ENCODE measurements at regions of chr2 and their contacts with region 1.

Region 1: DNA sequence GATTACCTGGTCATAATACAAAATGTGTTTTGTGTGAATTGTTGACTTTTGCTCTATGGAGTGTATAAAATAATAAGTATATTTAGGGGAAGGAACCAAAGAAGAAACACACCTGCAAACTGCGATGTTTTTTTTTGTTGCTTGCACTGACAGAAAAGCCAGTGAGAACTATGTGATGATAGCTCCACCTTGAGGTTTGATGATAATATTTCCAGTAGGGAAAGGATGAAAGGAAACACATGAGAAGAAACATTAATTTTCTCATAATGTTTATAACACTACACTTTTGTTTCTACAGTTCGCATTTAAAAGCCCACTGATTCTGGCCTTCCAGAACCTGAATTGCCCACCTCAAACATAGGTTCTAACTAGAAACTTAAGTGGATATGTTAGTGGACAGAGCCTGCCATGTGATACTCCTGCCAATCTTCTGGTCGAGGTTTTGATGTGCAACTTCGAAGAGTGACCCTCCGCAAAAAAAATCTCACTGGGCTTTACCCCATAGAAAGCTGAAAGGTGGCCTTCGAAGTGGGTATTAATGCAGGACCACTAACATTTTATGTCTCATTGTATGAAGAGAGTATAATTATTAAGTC is 476.4 kb upstream of the SPHKAP start:
- DNase-seq: no peak
- ATAC-seq: peak; percentile 69

Region 2: DNA sequence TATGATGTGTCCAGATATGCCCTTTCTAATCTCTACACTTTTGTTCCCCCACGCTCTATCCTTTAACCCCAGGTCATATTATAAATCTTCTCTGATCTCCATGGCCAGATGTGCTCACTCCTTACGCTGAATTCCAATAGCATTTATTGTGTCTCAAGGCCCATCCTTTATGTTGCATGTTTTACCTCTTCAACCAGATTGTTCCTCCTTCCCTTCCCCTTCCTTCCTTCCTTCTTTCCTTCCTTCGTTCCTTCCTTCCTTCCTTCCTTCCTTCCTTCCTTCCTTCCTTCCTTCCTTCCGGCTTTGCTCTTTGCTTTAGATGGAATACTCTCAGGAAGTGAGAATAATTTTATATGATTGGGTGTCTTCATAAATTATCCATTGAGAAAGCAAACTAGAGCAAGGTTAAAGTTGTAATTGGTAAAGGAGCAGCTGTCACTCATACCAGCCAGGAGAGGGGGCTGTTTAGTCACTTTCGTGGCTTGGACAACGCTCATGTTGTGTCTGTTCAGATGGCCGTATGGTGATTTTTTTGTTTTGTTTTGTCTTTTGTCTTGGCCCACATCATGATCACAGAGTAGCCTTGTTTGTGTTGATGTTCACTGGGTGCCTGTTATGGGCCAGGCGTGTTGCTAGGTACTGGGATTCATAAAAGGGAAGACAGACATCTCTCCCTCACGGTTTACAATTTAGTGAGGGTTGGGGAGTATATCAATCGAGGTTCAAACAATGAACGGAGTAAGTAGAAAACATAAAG is 718.5 kb before region 1 on chr2:
- intact Hi-C with region 1: loop called (anchors 5 kb)
- DNase-seq: no peak
- ATAC-seq: peak; percentile 74

Region 3: GRCh38 chr2:228056293-228057097 is 601.4 kb before region 1 on chr2:
- intact Hi-C with region 1: loop called (anchors 10 kb)
- DNase-seq: no peak
- ATAC-seq: peak; percentile 31

Region 4: DNA sequence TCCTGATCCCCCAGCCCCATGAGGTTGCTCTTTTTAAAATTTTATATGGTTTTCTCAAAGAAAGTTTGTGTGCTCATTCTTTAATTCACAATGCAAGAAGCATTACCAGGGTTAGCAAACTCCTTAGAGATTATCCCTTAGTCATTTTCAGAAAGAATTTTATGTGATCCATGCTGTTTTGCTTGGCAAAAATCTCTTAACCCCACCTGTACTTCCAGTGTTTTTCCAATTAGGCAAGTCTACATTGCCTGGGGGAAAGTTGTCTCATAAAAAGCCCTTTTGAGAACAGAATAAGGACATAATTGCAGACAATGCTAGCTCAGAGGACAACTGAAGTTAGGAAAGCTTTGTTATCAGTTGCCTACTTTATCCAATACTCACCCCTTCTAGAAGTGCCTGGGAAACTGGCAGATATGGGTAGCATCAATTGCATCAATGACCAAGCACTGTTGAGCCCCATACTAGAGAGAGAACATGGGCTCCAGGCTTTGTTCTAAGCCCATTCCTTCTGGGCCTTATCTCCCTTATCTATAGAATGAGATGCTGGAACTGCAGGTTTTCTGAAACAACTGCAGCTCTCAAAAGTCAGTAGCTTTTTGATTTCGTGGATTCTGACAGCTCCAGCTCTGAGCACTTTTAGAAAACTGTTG is 210.5 kb before region 1 on chr2:
- intact Hi-C with region 1: no loop called
- DNase-seq: no peak
- ATAC-seq: no peak

Region 5: DNA sequence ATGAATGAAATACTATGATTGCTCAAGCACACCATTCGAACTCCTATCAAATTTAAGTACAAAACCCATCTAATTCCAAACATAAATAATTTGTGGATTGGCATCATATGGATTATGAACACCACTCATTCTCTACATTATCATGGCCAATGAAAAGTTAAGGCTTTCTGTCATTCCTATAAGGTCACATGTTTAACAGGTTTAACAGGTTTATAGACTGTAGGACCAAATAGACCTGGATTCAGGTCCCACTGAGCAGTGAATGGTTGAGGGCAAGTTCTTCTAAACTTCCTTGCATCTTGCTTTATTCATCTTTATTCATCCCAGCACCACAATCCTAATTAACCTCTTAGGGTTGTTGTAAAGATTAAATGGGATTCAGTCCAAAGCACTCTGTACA is 1297.8 kb after region 1 on chr2:
- intact Hi-C with region 1: no loop called
- DNase-seq: no peak
- ATAC-seq: no peak

Measured in left ventricle myocardium superior (tissue), 1 donor.